CD8-positive, alpha-beta T cell (primary cell): ENCODE measurements at regions of chr2 and their contacts with region 1.

Region 1: GRCh38 chr2:174503161-174503809 is 16.5 kb upstream of the GPR155 start:
- DNase-seq: no peak
- ATAC-seq: no peak
- H3K4me3 ChIP-seq: no peak overlapping the region
- H3K4me3 Mint-ChIP-seq: no peak overlapping the region
- H3K27ac ChIP-seq: no peak overlapping the region
- H3K27ac Mint-ChIP-seq: no peak overlapping the region
- H3K4me1 ChIP-seq: no peaks in the 10 kb centered on the region
- H3K4me1 Mint-ChIP-seq: peaks cover 2% of the 10 kb centered on the region
- H3K27me3 ChIP-seq: no peaks in the 10 kb centered on the region
- H3K27me3 Mint-ChIP-seq: no peaks in the 10 kb centered on the region
- CTCF ChIP-seq: no peak

Region 2: DNA sequence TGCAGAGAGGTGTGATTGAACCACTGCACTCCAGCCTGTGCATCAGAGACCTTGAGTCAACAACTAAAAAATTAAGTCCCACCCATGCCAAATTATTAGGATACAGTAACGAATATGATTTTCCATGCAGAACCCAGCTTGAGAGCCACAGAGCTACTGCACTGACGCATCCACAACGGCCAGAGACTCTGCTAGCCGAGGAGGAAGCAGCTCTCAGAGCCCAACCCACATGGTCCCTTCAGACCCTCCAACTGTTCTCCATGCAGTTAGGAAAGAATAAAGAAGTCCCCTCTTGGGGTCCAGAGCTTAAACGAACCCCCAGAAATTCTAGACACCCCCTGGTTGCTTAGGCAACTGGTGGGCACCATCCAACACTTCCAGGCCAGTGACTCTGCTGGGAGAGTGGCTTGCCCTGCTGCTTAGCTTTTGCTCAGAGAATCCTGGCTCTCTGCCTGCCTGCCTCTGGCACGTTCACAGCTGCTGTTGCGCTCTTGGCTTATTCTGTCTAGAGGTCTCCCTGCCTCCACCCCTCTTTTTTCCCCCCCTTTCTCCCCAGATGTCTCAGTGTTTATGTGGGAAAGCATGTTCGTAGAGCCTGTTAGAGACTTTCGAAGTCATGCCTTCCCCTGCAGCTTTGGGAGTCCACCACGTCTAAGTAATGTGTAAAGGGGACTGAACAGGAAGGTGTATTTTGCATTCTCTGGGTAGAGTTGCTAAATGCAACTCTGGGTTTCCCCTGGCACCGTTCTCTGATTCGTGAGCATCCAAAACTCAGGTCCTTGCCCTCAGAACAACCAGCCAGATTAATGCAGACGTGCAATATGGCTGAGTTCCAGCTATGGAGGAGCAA is 512.1 kb before region 1 on chr2:
- CTCF ChIA-PET with region 1: no interaction called
- POLR2A ChIA-PET with region 1: no interaction called
- intact Hi-C with region 1: no loop called
- DNase-seq: no peak
- ATAC-seq: no peak
- H3K4me3 ChIP-seq: no peak overlapping the region
- H3K4me3 Mint-ChIP-seq: no peak overlapping the region
- H3K27ac ChIP-seq: no peak overlapping the region
- H3K27ac Mint-ChIP-seq: no peak overlapping the region
- H3K4me1 ChIP-seq: no peaks in the 10 kb centered on the region
- H3K4me1 Mint-ChIP-seq: no peaks in the 10 kb centered on the region
- H3K27me3 ChIP-seq: no peaks in the 10 kb centered on the region
- H3K27me3 Mint-ChIP-seq: peaks cover 4% of the 10 kb centered on the region
- CTCF ChIP-seq: no peak

Region 3: GRCh38 chr2:174492963-174493431 is 10.3 kb before region 1 on chr2:
- CTCF ChIA-PET with region 1: interaction called, 10 read pairs
- POLR2A ChIA-PET with region 1: interaction called, 4 read pairs
- intact Hi-C with region 1: no loop called
- DNase-seq: peak; percentile 34 to 94 (median 64)
- ATAC-seq: peak; percentile 85
- H3K4me3 ChIP-seq: peak overlapping the region; percentile 27 to 47
- H3K4me3 Mint-ChIP-seq: peak overlapping the region; percentile 85
- H3K27ac ChIP-seq: peak overlapping the region; percentile 71 to 88
- H3K27ac Mint-ChIP-seq: peak overlapping the region; percentile 97
- H3K4me1 ChIP-seq: peaks cover 71% of the 10 kb centered on the region
- H3K4me1 Mint-ChIP-seq: peaks cover 83% of the 10 kb centered on the region
- H3K27me3 ChIP-seq: no peaks in the 10 kb centered on the region
- H3K27me3 Mint-ChIP-seq: no peaks in the 10 kb centered on the region
- CTCF ChIP-seq: no peak